Endothelial cell of umbilical vein (primary cell): ENCODE measurements at regions of chr10 and their contacts with region 1.

Region 1: GRCh38 chr10:129030996-129031843 is 435.8 kb upstream of the MGMT start:
- DNase-seq: peak; percentile 68
- H3K4me3 ChIP-seq: no peak overlapping the region
- H3K27ac ChIP-seq: no peak overlapping the region
- H3K4me1 ChIP-seq: peaks cover 18% of the 10 kb centered on the region
- H3K27me3 ChIP-seq: peaks cover 0 to 3% of the 10 kb centered on the region in 2 experiments
- CTCF ChIP-seq: peak; percentile 94 to 96
- POLR2A ChIP-seq: no peak

Region 2: DNA sequence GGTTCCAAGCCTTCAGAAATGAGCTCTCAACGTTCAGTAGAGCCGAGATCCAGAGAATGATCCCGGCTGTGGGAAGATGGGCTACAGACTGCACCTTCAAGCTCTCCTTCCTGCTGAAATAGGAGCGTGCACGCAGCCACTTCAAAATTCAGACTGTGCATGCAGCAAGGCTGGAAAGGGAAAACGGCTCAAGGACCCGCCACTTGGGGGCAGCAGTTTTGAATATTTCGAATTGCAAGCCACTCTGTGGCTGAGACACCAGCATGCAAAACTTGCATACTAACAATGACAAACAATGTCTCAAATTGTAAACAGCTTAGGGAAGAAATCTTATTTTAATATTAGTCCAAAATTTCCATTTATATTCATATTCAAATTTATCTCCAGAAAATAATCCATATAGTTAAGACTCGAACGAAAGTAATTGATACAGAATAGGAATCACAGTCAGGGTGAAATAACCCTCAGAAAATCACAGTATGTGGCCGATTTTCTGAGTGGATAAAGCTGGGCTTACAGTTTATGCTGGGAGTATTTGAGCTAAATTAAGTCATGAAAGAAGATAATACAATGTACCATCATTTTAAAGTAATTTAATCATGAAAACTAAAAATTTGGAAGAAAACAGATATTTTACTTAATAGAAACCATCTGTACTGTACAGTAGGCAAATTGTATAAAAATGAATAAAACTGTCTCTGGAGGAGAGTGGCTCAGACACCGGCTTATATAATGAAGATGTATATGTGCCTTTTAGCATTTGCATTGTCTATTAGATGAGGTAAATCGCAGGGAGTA is 767.1 kb before region 1 on chr10:
- CTCF ChIA-PET with region 1: no interaction called
- POLR2A ChIA-PET with region 1: no interaction called
- dilution Hi-C with region 1: no loop called
- intact Hi-C with region 1: loop called (anchors 10 kb)
- DNase-seq: peak; percentile 52
- H3K4me3 ChIP-seq: no peak overlapping the region
- H3K27ac ChIP-seq: no peak overlapping the region
- H3K4me1 ChIP-seq: no peaks in the 10 kb centered on the region
- H3K27me3 ChIP-seq: peaks cover 2 to 12% of the 10 kb centered on the region in 2 experiments
- CTCF ChIP-seq: peak; percentile 60 to 73
- POLR2A ChIP-seq: no peak

Region 3: DNA sequence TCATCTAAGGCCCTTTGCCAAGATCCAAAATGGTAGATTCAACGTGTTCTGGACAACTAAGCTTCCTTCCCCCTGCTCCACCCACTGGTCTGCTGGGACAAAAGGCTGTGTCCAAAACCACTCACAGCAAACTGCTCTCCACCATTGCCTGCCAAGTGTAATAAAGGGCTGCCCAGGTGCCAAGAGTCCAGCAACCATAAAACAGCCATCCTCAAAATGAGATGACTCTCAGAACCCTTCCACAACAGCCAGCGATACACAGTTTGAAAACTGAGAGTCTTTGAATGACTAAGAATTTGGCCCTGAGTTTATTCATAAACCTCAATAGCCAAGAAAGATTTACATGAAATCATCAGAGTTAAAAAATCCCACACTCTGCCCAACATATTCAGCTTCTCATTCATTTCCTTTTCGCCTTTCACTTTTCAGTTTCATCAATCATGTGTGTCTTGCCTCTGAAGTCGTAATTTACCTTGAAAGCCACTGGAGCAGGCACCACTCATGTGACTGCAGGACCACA is 222.2 kb before region 1 on chr10:
- CTCF ChIA-PET with region 1: no interaction called
- POLR2A ChIA-PET with region 1: no interaction called
- dilution Hi-C with region 1: no loop called
- intact Hi-C with region 1: no loop called
- DNase-seq: no peak
- H3K4me3 ChIP-seq: no peak overlapping the region
- H3K27ac ChIP-seq: no peak overlapping the region
- H3K4me1 ChIP-seq: no peaks in the 10 kb centered on the region
- H3K27me3 ChIP-seq: no peaks in the 10 kb centered on the region
- CTCF ChIP-seq: no peak
- POLR2A ChIP-seq: no peak

Region 4: GRCh38 chr10:129305046-129305445 is 273.8 kb after region 1 on chr10:
- CTCF ChIA-PET with region 1: no interaction called
- POLR2A ChIA-PET with region 1: no interaction called
- dilution Hi-C with region 1: no loop called
- intact Hi-C with region 1: loop called (anchors 1 kb)
- DNase-seq: peak; percentile 73
- H3K4me3 ChIP-seq: peak overlapping the region in 1 of 3 experiments; percentile 7
- H3K27ac ChIP-seq: peak overlapping the region; percentile 61
- H3K4me1 ChIP-seq: peaks cover 14% of the 10 kb centered on the region
- H3K27me3 ChIP-seq: no peaks in the 10 kb centered on the region
- CTCF ChIP-seq: no peak
- POLR2A ChIP-seq: no peak

Region 5: GRCh38 chr10:129466703-129467358 is 435.6 kb after region 1 on chr10 and contains the start of gene MGMT:
- CTCF ChIA-PET with region 1: no interaction called
- POLR2A ChIA-PET with region 1: no interaction called
- dilution Hi-C with region 1: no loop called
- intact Hi-C with region 1: loop called (anchors 5 kb)
- DNase-seq: peak; percentile 50
- H3K4me3 ChIP-seq: peak within 1 kb of the TSS; percentile 34 to 64 (median 63)
- H3K27ac ChIP-seq: peak within 1 kb of the TSS; percentile 25
- H3K4me1 ChIP-seq: peaks cover 10% of the 10 kb centered on the region
- H3K27me3 ChIP-seq: no peaks in the 10 kb centered on the region
- CTCF ChIP-seq: no peak
- POLR2A ChIP-seq: peak; percentile 61
- total RNA-seq, gene MGMT: 11.1 and 15.0 TPM in 2 replicates

Region 6: DNA sequence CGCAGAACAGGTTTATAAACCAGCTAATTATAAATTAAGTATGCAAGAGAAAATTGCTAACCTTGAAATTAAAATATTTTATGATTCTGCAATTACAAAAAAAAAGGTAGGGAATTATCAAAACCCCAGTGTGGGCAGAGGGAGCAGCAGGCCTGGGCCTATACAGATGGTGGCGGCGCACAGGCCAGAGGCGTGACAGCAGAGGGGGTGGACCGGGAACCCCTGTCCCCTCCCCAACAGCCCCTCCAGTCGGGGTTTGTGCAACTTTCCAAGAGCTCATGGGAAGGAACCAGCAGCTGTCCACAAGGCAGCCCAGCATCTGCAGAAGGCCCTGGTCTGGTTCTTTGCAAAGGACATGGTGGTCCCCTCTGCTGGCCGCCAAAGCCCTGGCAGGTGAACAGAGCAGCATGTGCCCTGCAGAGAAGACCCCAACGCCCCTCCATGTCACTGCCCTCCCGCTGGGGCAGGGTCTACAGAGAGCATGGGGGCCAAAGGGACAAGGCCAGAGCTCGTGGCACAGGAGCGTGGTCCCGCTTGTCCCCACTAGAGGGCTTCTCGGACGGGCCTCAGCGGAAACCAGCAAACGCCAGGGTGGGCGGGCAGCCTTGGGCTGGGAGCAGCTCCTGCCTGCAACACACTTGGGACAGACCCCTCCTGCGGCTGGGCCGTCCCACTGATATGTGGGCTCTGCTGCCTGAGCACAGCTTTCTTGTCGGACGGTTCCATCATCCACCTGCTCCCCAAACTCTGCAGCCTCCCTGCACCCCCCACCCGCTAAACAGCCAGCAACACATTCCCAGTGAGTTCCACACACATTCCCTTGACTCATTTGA is 857.8 kb after region 1 on chr10:
- CTCF ChIA-PET with region 1: no interaction called
- POLR2A ChIA-PET with region 1: no interaction called
- dilution Hi-C with region 1: no loop called
- intact Hi-C with region 1: loop called (anchors 2 kb)
- DNase-seq: peak; percentile 2
- H3K4me3 ChIP-seq: no peak overlapping the region
- H3K27ac ChIP-seq: no peak overlapping the region
- H3K4me1 ChIP-seq: no peaks in the 10 kb centered on the region
- H3K27me3 ChIP-seq: no peaks in the 10 kb centered on the region
- CTCF ChIP-seq: peak; percentile 53 to 57
- POLR2A ChIP-seq: no peak

Region 7: GRCh38 chr10:130179640-130180039 is 1148.4 kb after region 1 on chr10:
- CTCF ChIA-PET with region 1: no interaction called
- POLR2A ChIA-PET with region 1: no interaction called
- dilution Hi-C with region 1: no loop called
- intact Hi-C with region 1: loop called (anchors 2 kb)
- DNase-seq: peak; percentile 82
- H3K4me3 ChIP-seq: no peak overlapping the region
- H3K27ac ChIP-seq: no peak overlapping the region
- H3K4me1 ChIP-seq: no peaks in the 10 kb centered on the region
- H3K27me3 ChIP-seq: no peaks in the 10 kb centered on the region
- CTCF ChIP-seq: peak; percentile 38 to 46
- POLR2A ChIP-seq: no peak